ENCODE measurements at regions of chr2 and their contacts with region 1.

Region 1: GRCh38 chr2:173021939-173022371 is 53.7 kb upstream of the MAP3K20 start:
- DNase-seq: peak; percentile 49 to 81
- H3K4me3 ChIP-seq: no peak overlapping the region
- H3K27ac ChIP-seq: no peak overlapping the region
- H3K4me1 ChIP-seq: peaks cover 4% of the 10 kb centered on the region
- H3K27me3 ChIP-seq: no peaks in the 10 kb centered on the region
- CTCF ChIP-seq: peak; percentile 93

Region 2: DNA sequence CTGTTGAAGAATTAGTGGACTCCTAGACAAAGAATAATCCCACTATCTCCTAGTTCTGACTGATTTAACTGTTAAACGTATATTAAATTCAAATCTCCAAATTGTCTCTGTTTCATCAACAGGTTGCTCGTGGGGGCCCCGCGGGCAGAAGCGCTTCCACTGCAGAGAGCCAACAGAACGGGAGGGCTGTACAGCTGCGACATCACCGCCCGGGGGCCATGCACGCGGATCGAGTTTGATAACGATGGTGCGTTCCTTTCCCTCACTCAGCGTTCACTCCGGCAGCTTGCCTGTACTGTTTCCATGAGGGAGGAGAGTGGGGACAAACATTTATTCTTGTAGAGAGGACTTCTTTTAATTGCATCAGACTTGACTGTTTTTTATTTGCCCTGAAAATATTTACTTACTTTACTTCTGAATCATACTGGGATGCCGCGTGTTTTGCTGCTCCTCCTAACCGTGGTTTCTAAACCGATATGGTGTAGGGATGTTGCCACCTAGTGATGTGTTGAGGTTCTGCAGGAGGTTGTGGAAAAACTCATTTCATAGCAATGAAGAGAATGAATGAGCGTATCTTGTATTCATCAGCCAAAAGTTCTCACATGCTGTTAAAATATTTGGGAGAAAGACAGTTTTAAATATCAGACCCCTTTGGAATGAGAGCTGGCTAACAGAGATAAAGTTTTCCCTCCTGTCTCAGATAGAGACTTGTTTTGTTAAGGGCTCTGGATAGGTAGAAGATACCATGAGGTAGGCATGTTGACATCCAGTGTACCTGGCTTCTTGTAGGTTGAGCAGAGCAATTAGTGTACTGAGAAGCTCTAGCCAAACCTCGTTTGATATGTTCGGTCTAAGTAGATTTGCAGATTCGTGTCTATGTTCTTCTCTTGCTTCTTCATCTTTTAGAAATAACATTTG is 556.3 kb before region 1 on chr2:
- CTCF ChIA-PET with region 1: no interaction called
- POLR2A ChIA-PET with region 1: no interaction called
- intact Hi-C with region 1: no loop called
- DNase-seq: peak; percentile 78 to 91
- H3K4me3 ChIP-seq: no peak overlapping the region
- H3K27ac ChIP-seq: peak overlapping the region; percentile 61
- H3K4me1 ChIP-seq: peaks cover 49% of the 10 kb centered on the region
- H3K27me3 ChIP-seq: no peaks in the 10 kb centered on the region
- CTCF ChIP-seq: peak; percentile 100

Region 3: GRCh38 chr2:172806493-172806892 is 215.5 kb before region 1 on chr2:
- CTCF ChIA-PET with region 1: no interaction called
- POLR2A ChIA-PET with region 1: no interaction called
- intact Hi-C with region 1: loop called (anchors 1 kb)
- DNase-seq: peak; percentile 23 to 68
- H3K4me3 ChIP-seq: no peak overlapping the region
- H3K27ac ChIP-seq: no peak overlapping the region
- H3K4me1 ChIP-seq: no peaks in the 10 kb centered on the region
- H3K27me3 ChIP-seq: no peaks in the 10 kb centered on the region
- CTCF ChIP-seq: peak; percentile 100

Region 4: GRCh38 chr2:172836386-172836821 is 185.6 kb before region 1 on chr2:
- CTCF ChIA-PET with region 1: no interaction called
- POLR2A ChIA-PET with region 1: no interaction called
- intact Hi-C with region 1: no loop called
- DNase-seq: peak; percentile 82 to 100
- H3K4me3 ChIP-seq: no peak overlapping the region
- H3K27ac ChIP-seq: peak overlapping the region; percentile 77
- H3K4me1 ChIP-seq: peaks cover 44% of the 10 kb centered on the region
- H3K27me3 ChIP-seq: no peaks in the 10 kb centered on the region
- CTCF ChIP-seq: no peak

Region 5: GRCh38 chr2:172864182-172864581 is 157.8 kb before region 1 on chr2:
- CTCF ChIA-PET with region 1: no interaction called
- POLR2A ChIA-PET with region 1: no interaction called
- intact Hi-C with region 1: loop called (anchors 1 kb)
- DNase-seq: peak; percentile 50 to 53
- H3K4me3 ChIP-seq: no peak overlapping the region
- H3K27ac ChIP-seq: no peak overlapping the region
- H3K4me1 ChIP-seq: no peaks in the 10 kb centered on the region
- H3K27me3 ChIP-seq: no peaks in the 10 kb centered on the region
- CTCF ChIP-seq: peak; percentile 79

Region 6: GRCh38 chr2:172972005-172972619 is 49.8 kb before region 1 on chr2:
- CTCF ChIA-PET with region 1: interaction called, 5 read pairs
- POLR2A ChIA-PET with region 1: no interaction called
- intact Hi-C with region 1: loop called (anchors 1 kb)
- DNase-seq: peak; percentile 66 to 69
- H3K4me3 ChIP-seq: no peak overlapping the region
- H3K27ac ChIP-seq: no peak overlapping the region
- H3K4me1 ChIP-seq: peaks cover 30% of the 10 kb centered on the region
- H3K27me3 ChIP-seq: no peaks in the 10 kb centered on the region
- CTCF ChIP-seq: peak; percentile 99

Region 7: DNA sequence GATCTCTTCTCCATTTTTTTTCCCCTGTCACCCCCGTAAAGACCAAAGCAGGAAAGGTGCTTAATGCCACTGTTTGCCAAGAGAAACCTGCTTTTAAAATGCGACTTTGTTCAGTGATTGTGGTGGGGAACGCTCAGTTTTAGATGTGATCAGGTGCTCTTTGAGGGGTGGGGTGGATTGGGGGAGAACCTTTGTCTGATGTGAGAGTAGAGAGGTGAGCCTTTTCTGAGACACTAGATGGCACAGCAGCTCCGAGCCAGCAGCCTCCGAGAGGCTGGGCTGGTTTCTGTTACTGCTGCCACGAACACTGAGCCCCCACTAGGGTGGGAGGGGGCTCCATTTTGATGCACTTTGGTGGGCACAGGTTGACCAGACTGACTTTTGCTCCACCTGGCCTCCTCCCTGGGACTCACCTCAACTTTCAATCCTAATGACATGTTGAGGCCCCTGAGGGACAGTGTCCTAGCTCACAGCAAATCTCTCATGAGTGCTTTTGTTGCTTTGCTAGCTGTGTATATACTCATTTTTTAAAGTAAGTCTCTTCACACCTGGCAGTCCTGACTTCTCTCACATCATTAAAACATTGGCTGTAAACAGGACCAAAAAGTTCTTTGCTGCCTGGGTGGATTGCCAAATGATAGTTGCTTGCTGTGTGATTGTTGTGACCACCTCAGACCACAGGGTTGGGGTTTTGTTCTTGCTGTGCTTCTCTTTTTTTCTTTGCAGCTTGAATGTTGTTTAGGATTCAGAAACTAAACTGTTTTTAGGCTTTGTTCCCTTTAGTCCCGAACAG is 44.5 kb before region 1 on chr2:
- CTCF ChIA-PET with region 1: interaction called, 5 read pairs
- POLR2A ChIA-PET with region 1: no interaction called
- intact Hi-C with region 1: loop called (anchors 1 kb)
- DNase-seq: no peak
- H3K4me3 ChIP-seq: no peak overlapping the region
- H3K27ac ChIP-seq: no peak overlapping the region
- H3K4me1 ChIP-seq: peaks cover 16% of the 10 kb centered on the region
- H3K27me3 ChIP-seq: no peaks in the 10 kb centered on the region
- CTCF ChIP-seq: no peak

Region 8: DNA sequence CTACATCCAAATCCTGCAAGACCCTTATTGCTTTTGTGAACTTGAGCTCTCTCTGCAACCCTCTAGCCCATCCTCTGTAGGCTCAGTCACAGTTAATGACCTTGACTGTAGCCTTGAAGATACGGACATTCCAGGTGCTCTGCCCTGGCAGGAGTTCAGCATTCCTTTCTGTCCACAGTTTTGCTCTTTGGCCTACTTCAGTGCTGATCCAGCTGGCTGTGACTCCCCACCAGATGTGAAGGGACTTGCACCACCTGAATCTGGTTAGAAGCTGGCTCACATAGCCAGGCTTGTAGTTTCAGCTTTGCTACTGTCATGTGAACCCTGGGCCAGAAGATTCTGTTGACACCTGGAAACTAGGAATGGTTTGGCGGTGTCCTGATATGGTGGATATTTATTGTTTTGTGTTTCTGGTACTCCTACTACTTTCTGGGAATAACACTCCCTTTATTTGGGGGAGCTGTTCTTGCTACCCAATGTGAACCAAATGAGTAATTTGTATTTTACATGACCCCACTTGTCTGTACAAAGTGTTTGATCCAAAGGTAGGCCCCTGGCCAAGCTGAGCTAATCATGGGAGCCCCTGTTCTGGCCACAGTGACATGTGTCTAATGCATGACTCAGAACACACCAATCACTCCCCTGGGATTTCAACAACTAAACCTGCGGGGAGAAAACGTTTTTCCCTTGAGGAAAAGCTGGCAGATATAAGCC is 406.1 kb after region 1 on chr2:
- CTCF ChIA-PET with region 1: no interaction called
- POLR2A ChIA-PET with region 1: no interaction called
- intact Hi-C with region 1: no loop called
- DNase-seq: peak; percentile 54 to 58
- H3K4me3 ChIP-seq: no peak overlapping the region
- H3K27ac ChIP-seq: no peak overlapping the region
- H3K4me1 ChIP-seq: peaks cover 18% of the 10 kb centered on the region
- H3K27me3 ChIP-seq: no peaks in the 10 kb centered on the region
- CTCF ChIP-seq: no peak

Measured in PC-9 (cell line).